ENCODE measurements at regions of chr16 and their contacts with region 1.

Region 1: DNA sequence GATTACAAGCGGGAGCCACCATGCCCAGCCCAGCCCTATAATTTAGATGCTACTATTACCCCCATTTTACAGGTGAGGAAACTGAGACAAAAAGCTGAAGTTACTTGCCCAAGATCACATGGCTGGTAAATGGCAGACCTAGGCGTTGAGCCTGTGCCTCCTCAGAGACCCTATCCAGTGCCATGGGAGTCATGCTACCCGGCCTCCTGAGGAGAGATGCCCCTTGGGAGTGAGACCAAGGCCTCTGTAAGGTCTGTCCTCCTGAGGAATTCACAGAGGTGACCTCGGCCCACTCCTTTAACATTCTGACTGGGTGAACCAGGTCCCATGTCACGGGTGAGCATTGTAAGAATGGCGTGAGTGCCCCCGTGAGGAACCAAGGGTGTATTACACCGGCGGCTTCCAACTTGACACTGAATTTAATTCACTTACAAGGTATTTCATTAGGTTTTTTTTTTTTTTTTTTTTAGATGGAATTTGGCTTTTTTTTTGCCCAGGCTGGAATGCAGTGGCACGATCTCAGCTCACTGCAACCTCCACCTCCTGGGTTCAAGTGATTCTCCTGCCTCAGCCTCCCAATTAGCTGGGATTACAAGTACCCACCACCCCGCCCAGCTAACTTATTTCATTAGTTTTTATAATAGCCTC is 95.7 kb downstream of the ABCC6 start:
- DNase-seq: peak; percentile 57 to 82 (median 76)
- H3K4me3 ChIP-seq: no peak overlapping the region
- H3K27ac ChIP-seq: no peak overlapping the region
- H3K4me1 ChIP-seq: no peaks in the 10 kb centered on the region
- H3K27me3 ChIP-seq: no peaks in the 10 kb centered on the region
- CTCF ChIP-seq: peak; percentile 70 to 89 (median 81)
- EP300 ChIP-seq: no peak
- POLR2A ChIP-seq: no peak

Region 2: GRCh38 chr16:15757630-15758251 is 369.9 kb before region 1 on chr16:
- intact Hi-C with region 1: loop called in 3 of 4 experiments (anchors 10 kb)
- DNase-seq: no peak
- H3K4me3 ChIP-seq: no peak overlapping the region
- H3K27ac ChIP-seq: no peak overlapping the region
- H3K4me1 ChIP-seq: no peaks in the 10 kb centered on the region
- H3K27me3 ChIP-seq: no peaks in the 10 kb centered on the region
- CTCF ChIP-seq: no peak
- EP300 ChIP-seq: no peak
- POLR2A ChIP-seq: no peak

Region 3: GRCh38 chr16:15765880-15766279 is 361.7 kb before region 1 on chr16:
- intact Hi-C with region 1: loop called in 2 of 4 experiments (anchors 10 kb)
- DNase-seq: no peak
- H3K4me3 ChIP-seq: no peak overlapping the region
- H3K27ac ChIP-seq: no peak overlapping the region
- H3K4me1 ChIP-seq: peaks cover 5% of the 10 kb centered on the region
- H3K27me3 ChIP-seq: no peaks in the 10 kb centered on the region
- CTCF ChIP-seq: peak in 1 of 3 donors; percentile 17
- EP300 ChIP-seq: no peak
- POLR2A ChIP-seq: no peak

Region 4: GRCh38 chr16:15874745-15875314 is 252.8 kb before region 1 on chr16:
- intact Hi-C with region 1: loop called in 3 of 4 experiments (anchors 2 to 5 kb)
- DNase-seq: peak; percentile 49 to 66 (median 57)
- H3K4me3 ChIP-seq: no peak overlapping the region
- H3K27ac ChIP-seq: peak overlapping the region in 1 of 2 donors; percentile 16
- H3K4me1 ChIP-seq: no peaks in the 10 kb centered on the region
- H3K27me3 ChIP-seq: no peaks in the 10 kb centered on the region
- CTCF ChIP-seq: peak; percentile 20 to 45 (median 33)
- EP300 ChIP-seq: no peak
- POLR2A ChIP-seq: no peak

Region 5: DNA sequence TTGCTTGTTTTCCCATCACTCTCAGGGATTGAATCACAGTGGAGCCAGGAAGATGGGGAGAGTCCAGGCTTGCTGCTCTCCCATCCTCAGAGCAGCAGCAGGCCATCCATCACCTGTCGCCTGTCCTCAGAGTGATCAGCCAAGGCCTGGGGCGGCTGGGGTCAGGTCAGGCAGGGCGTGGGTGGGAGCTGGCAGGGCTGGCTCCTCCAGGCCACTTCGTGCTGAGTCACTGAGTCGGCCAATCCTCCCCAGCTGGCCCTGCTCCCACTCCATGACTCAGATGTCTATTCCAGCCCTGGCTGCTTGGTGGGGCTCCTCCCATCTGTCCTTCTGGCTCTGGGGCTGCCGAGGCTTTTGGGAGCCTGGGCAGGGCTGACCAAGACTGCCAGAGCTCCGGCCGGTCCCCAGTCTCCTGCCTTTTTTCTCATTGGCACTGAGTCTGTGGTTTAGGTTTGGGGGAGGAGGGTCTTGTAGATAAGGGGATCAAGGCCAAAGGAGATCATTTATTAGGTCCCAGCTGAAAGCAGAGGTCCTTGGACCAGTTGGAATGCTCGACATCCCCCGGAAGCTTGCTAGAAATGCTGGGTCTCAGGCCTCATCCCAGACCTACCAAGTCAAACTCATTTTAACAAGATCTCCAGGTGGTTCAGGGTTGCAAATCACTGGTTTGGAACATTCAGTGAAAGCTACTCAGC is 105.5 kb before region 1 on chr16:
- intact Hi-C with region 1: loop called in 1 of 4 experiments (anchors 10 kb)
- DNase-seq: peak; percentile 97 to 99 (median 97)
- H3K4me3 ChIP-seq: no peak overlapping the region
- H3K27ac ChIP-seq: peak overlapping the region; percentile 38 to 62
- H3K4me1 ChIP-seq: peaks cover 13% of the 10 kb centered on the region
- H3K27me3 ChIP-seq: no peaks in the 10 kb centered on the region
- CTCF ChIP-seq: no peak
- EP300 ChIP-seq: no peak
- POLR2A ChIP-seq: no peak